Left lung (tissue), 14 donors: ENCODE measurements at regions of chr3 and their contacts with region 1.

Region 1: GRCh38 chr3:10224784-10225665 is 23.2 kb upstream of the TATDN2 start:
- DNase-seq: peak in 3 of 4 donors; percentile 31 to 69 (median 64)
- ATAC-seq: peak; percentile 91
- H3K4me3 ChIP-seq: no peak overlapping the region
- H3K27ac ChIP-seq: peak overlapping the region in 1 of 2 donors; percentile 63
- H3K4me1 ChIP-seq: peaks cover 0 to 88% of the 10 kb centered on the region in 2 donors
- H3K27me3 ChIP-seq: no peaks in the 10 kb centered on the region
- CTCF ChIP-seq: peak; percentile 73 to 87

Region 2: GRCh38 chr3:10164546-10165393 is 60.3 kb before region 1 on chr3 and contains the start of gene IRAK2:
- intact Hi-C with region 1: loop called in 1 of 2 experiments (anchors 10 kb)
- DNase-seq: peak; percentile 42 to 97 (median 74)
- ATAC-seq: peak; percentile 97
- H3K4me3 ChIP-seq: peak within 1 kb of the TSS; percentile 77 to 80
- H3K27ac ChIP-seq: peak within 1 kb of the TSS; percentile 37 to 81
- H3K4me1 ChIP-seq: peaks cover 2 to 51% of the 10 kb centered on the region in 2 donors
- H3K27me3 ChIP-seq: no peaks in the 10 kb centered on the region
- CTCF ChIP-seq: peak; percentile 98 to 99
- polyA plus RNA-seq, gene IRAK2: 1.7 to 2.6 (median 2.3) TPM

Region 3: GRCh38 chr3:10428406-10429091 is 203.5 kb after region 1 on chr3:
- intact Hi-C with region 1: no loop called
- DNase-seq: no peak
- ATAC-seq: no peak
- H3K4me3 ChIP-seq: no peak overlapping the region
- H3K27ac ChIP-seq: no peak overlapping the region
- H3K4me1 ChIP-seq: no peaks in the 10 kb centered on the region
- H3K27me3 ChIP-seq: peaks cover 0 to 7% of the 10 kb centered on the region in 2 donors
- CTCF ChIP-seq: no peak